ENCODE measurements at regions of chr1 and their contacts with region 1.

Region 1: GRCh38 chr1:84944767-84945486 is 51.9 kb upstream of the LPAR3 start:
- DNase-seq: peak; percentile 46 to 91 (median 85)
- H3K4me3 ChIP-seq: peak overlapping the region; percentile 67
- H3K4me3 Mint-ChIP-seq: peak overlapping the region; percentile 84 to 92 (median 87)
- H3K27ac ChIP-seq: peak overlapping the region; percentile 67
- H3K27ac Mint-ChIP-seq: peak overlapping the region; percentile 93 to 97 (median 97)
- H3K4me1 ChIP-seq: no peaks in the 10 kb centered on the region
- H3K4me1 Mint-ChIP-seq: peaks cover 12 to 25% (median 19%) of the 10 kb centered on the region in 3 donors
- H3K27me3 ChIP-seq: no peaks in the 10 kb centered on the region
- H3K27me3 Mint-ChIP-seq: peaks cover 0 to 2% of the 10 kb centered on the region in 2 donors

Region 2: GRCh38 chr1:84973498-84974334 is 28.8 kb after region 1 on chr1:
- CTCF ChIA-PET with region 1: interaction called, 26 read pairs
- POLR2A ChIA-PET with region 1: no interaction called
- DNase-seq: peak in 1 of 5 donors; percentile 4
- H3K4me3 ChIP-seq: no peak overlapping the region
- H3K4me3 Mint-ChIP-seq: peak overlapping the region in 3 of 7 donors; percentile 5 to 79 (median 56)
- H3K27ac ChIP-seq: no peak overlapping the region
- H3K27ac Mint-ChIP-seq: peak overlapping the region; percentile 10 to 84 (median 52)
- H3K4me1 ChIP-seq: peaks cover 18% of the 10 kb centered on the region
- H3K4me1 Mint-ChIP-seq: peaks cover 57 to 90% (median 84%) of the 10 kb centered on the region in 3 donors
- H3K27me3 ChIP-seq: no peaks in the 10 kb centered on the region
- H3K27me3 Mint-ChIP-seq: no peaks in the 10 kb centered on the region

Region 3: GRCh38 chr1:84996846-84997666 is 52.1 kb after region 1 on chr1 and contains the start of gene MCOLN2:
- CTCF ChIA-PET with region 1: interaction called, 34 read pairs
- POLR2A ChIA-PET with region 1: interaction called, 9 read pairs
- DNase-seq: peak; percentile 43 to 80 (median 55)
- H3K4me3 ChIP-seq: peak within 1 kb of the TSS; percentile 85
- H3K4me3 Mint-ChIP-seq: peak within 1 kb of the TSS; percentile 89 to 98 (median 94)
- H3K27ac ChIP-seq: peak within 1 kb of the TSS; percentile 79
- H3K27ac Mint-ChIP-seq: peak within 1 kb of the TSS; percentile 80 to 94 (median 91)
- H3K4me1 ChIP-seq: peaks cover 24% of the 10 kb centered on the region
- H3K4me1 Mint-ChIP-seq: peaks cover 48 to 85% (median 81%) of the 10 kb centered on the region in 3 donors
- H3K27me3 ChIP-seq: peaks cover 4% of the 10 kb centered on the region
- H3K27me3 Mint-ChIP-seq: peaks cover 0 to 5% of the 10 kb centered on the region in 2 donors
- total RNA-seq, gene MCOLN2: 103 to 110 TPM

Region 4: DNA sequence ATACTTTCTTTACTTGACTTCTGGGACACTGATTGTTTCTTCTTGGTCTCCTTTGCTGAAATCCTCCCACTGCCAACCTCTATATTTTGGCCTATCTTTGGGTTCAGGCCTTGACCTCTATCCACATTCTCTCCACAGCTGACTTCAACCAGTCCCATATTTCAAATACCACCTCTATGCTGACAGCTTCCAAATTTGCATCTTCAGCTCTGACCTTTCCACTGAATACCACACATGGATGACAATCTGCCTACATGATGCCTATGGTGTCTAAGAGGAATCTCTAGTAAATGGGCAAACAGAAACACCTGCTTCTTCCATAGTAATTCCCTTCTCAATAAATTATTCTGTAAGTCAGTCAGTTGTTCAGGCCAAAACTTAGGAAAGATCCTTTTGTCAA is 90.2 kb after region 1 on chr1:
- CTCF ChIA-PET with region 1: interaction called, 25 read pairs
- POLR2A ChIA-PET with region 1: no interaction called
- DNase-seq: no peak
- H3K4me3 ChIP-seq: no peak overlapping the region
- H3K4me3 Mint-ChIP-seq: no peak overlapping the region
- H3K27ac ChIP-seq: no peak overlapping the region
- H3K27ac Mint-ChIP-seq: peak overlapping the region in 1 of 8 donors; percentile 1
- H3K4me1 ChIP-seq: no peaks in the 10 kb centered on the region
- H3K4me1 Mint-ChIP-seq: no peaks in the 10 kb centered on the region
- H3K27me3 ChIP-seq: no peaks in the 10 kb centered on the region
- H3K27me3 Mint-ChIP-seq: peaks cover 0 to 5% of the 10 kb centered on the region in 2 donors

Region 5: DNA sequence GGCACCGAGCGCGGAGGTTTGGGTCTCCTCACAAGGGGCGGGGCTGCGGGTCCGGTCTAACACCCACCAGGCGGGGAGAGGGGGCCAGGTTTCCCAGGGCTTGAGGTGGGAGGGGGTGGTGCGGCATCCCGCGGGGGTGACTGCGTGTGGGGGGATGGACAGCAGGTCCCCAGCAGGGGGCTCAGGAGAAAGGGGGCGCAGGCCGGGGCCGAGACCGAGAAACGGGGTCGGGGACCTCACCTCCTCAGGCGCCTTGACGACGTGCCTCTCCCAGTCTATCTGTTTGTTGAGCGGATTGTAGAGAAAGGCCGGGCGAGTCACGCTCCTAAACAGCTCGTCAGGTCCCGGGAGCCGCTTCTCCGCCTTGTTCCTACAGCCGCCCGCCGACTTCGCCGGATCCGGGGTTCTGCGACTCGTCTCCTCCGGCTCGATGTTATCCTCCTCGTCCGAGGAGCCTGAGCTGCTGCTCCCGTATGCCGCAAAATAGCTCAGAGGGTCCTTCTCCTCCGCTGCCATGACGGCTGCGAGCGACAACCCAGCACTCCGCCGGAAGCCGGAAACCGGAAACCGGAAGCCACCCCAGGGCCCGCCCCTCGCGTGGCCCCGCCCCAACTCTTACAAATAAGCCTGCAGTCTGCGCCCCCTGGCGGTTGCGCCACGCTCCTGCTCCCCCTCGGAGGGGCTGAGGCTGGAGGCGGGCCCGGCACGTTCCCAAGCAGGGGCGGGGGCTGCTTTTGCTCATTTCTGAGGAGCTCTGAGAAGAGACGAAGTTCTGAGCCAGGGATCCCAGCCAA is 314.4 kb after region 1 on chr1 and contains the start of gene C1orf52:
- CTCF ChIA-PET with region 1: interaction called, 114 read pairs
- POLR2A ChIA-PET with region 1: interaction called, 12 read pairs
- DNase-seq: peak; percentile 95 to 98 (median 95)
- H3K4me3 ChIP-seq: peak within 1 kb of the TSS; percentile 90
- H3K4me3 Mint-ChIP-seq: peak within 1 kb of the TSS; percentile 97 to 100 (median 98)
- H3K27ac ChIP-seq: peak within 1 kb of the TSS; percentile 85
- H3K27ac Mint-ChIP-seq: peak within 1 kb of the TSS; percentile 91 to 99 (median 98)
- H3K4me1 ChIP-seq: peaks cover 25% of the 10 kb centered on the region
- H3K4me1 Mint-ChIP-seq: peaks cover 33 to 53% (median 48%) of the 10 kb centered on the region in 3 donors
- H3K27me3 ChIP-seq: no peaks in the 10 kb centered on the region
- H3K27me3 Mint-ChIP-seq: no peaks in the 10 kb centered on the region
- total RNA-seq, gene C1orf52: 27.7 to 29.3 TPM

Measured in CD8-positive, alpha-beta memory T cell (primary cell).